ENCODE measurements at regions of chr20 and their contacts with region 1.

Region 1: DNA sequence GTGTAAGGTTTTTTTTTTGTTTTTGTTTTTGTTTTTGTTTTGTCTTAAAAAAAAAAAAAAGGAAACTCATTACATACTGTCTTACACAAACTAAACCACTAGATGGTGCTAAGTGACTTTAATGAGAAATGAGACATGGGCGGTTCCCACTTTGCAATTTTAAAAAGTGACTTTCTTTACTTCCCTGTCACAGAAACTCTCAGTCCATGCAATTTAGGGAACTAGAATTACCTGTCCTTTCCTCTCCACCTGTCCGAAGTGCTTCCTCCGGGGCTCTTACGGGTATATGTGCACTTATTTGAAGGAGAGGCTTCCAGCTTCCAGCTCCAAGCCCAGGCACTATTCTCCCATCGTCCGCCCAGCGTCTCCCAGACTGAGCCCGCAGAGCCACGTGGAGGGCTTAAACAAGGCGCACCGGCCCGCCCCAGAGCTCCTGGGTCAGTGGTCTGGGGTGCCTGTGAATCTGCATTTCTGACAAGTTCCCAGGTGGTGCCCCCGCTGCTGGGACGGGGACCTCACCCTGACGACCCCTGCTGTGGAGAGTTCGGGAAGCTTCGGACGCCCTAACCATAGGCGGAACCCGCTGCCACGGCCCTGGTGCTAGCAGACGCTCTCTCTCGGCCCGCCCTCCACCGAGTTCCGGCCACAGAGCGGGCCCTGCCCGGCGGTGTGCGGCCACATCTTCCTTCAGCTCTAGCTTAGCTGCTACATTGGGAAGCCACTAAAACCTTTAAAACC is 26.1 kb downstream of the BFSP1 start:
- DNase-seq: peak in 1 of 2 experiments; percentile 81
- H3K4me3 ChIP-seq: peak overlapping the region; percentile 4 to 55 (median 44); a peak in 7 of 8 replicates
- H3K27ac ChIP-seq: no peak overlapping the region
- H3K4me1 ChIP-seq: peaks cover 0 to 10% (median 3%) of the 10 kb centered on the region in 4 experiments; a peak in 4 of 7 replicates
- H3K27me3 ChIP-seq: peaks cover 0 to 9% (median 1%) of the 10 kb centered on the region in 4 experiments; a peak in 3 of 7 replicates
- CTCF ChIP-seq: peak in 2 of 3 experiments; percentile 45 to 50; a peak in 2 of 4 replicates
- EP300 ChIP-seq: no peak
- POLR2A ChIP-seq: no peak; a peak in 1 of 3 replicates
- RAD21 ChIP-seq: peak; percentile 71 to 83

Region 2: GRCh38 chr20:17491041-17491440 is 14.0 kb before region 1 on chr20:
- CTCF ChIA-PET with region 1: interaction called, 13 read pairs
- POLR2A ChIA-PET with region 1: no interaction called
- DNase-seq: no peak
- H3K4me3 ChIP-seq: no peak overlapping the region
- H3K27ac ChIP-seq: no peak overlapping the region
- H3K4me1 ChIP-seq: no peaks in the 10 kb centered on the region
- H3K27me3 ChIP-seq: no peaks in the 10 kb centered on the region
- CTCF ChIP-seq: no peak
- EP300 ChIP-seq: no peak
- POLR2A ChIP-seq: no peak
- RAD21 ChIP-seq: no peak

Region 3: GRCh38 chr20:17518339-17519052 is 13.4 kb after region 1 on chr20:
- CTCF ChIA-PET with region 1: interaction called, 23 read pairs
- POLR2A ChIA-PET with region 1: interaction called, 10 read pairs
- DNase-seq: peak in 1 of 2 experiments; percentile 63
- H3K4me3 ChIP-seq: no peak overlapping the region
- H3K27ac ChIP-seq: no peak overlapping the region
- H3K4me1 ChIP-seq: no peaks in the 10 kb centered on the region
- H3K27me3 ChIP-seq: no peaks in the 10 kb centered on the region
- CTCF ChIP-seq: no peak
- EP300 ChIP-seq: no peak
- POLR2A ChIP-seq: no peak
- RAD21 ChIP-seq: no peak

Region 4: DNA sequence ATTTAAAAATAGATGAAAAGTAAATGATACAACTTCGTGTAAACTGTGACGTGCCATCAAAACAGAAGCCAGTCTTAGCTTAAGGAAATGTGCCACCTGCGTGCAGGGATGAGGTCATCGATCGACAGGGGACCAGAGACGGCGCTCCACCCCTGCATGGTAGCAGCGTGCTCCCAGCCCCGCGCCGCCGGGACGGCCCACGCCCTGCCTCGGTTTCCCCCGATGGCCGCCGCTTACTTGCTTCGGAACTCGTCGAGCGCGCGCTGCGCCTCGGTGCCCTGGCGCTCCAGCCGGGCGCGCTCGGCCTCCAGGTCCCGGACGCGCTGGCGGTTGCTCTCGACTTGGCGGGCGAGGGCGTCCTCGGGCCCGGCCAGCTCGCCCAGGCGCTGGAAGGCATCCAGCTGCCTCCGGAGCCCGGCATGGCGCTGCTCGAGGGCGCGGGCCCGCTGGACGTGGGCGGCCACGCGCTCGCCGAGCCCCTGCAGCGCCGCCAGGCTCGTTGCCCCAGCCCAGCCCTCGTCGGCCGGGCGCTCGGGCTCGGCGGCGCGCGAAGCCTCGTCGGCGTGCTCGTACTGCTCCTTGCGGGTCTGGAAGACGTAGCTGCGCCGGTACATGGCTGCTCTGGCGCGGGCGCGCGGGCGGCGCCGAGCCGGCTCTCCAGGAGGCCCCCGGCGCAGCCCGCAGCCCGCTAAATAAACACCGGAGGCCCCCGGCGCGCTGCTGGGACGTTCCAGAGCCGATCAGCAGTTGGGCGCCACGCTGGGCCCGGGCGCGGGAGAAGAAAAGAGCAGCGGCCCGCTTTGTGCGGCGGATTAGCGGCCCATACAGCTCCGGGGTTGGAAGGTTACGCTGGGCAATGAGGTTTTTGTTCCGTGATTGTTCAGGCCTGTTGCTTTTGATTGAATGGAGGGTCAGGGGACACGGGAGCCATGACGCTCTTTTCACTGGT is 25.9 kb after region 1 on chr20 and contains the start of gene BFSP1:
- CTCF ChIA-PET with region 1: interaction called, 13 read pairs
- POLR2A ChIA-PET with region 1: interaction called, 7 read pairs
- DNase-seq: peak; percentile 25 to 82
- H3K4me3 ChIP-seq: peak within 1 kb of the TSS; percentile 46 to 67 (median 52)
- H3K27ac ChIP-seq: peak within 1 kb of the TSS; percentile 63; the same call in 1 of the 2 replicates
- H3K4me1 ChIP-seq: peaks cover 5 to 12% (median 9%) of the 10 kb centered on the region in 4 experiments
- H3K27me3 ChIP-seq: peaks cover 2 to 17% (median 11%) of the 10 kb centered on the region in 4 experiments
- CTCF ChIP-seq: no peak
- EP300 ChIP-seq: no peak
- POLR2A ChIP-seq: peak in 1 of 2 experiments; percentile 47; a peak in 1 of 3 replicates
- RAD21 ChIP-seq: no peak
- total RNA-seq, gene BFSP1: 2.5 and 3.2 TPM in 2 replicates

Region 5: GRCh38 chr20:17536944-17537444 is 31.9 kb after region 1 on chr20:
- CTCF ChIA-PET with region 1: interaction called, 13 read pairs
- POLR2A ChIA-PET with region 1: interaction called, 3 read pairs
- DNase-seq: peak; percentile 71 to 78
- H3K4me3 ChIP-seq: no peak overlapping the region
- H3K27ac ChIP-seq: no peak overlapping the region
- H3K4me1 ChIP-seq: peaks cover 5 to 13% (median 8%) of the 10 kb centered on the region in 4 experiments; a peak in 6 of 7 replicates
- H3K27me3 ChIP-seq: no peaks in the 10 kb centered on the region
- CTCF ChIP-seq: peak; percentile 64 to 99 (median 98)
- EP300 ChIP-seq: no peak
- POLR2A ChIP-seq: no peak
- RAD21 ChIP-seq: peak; percentile 97

Region 6: DNA sequence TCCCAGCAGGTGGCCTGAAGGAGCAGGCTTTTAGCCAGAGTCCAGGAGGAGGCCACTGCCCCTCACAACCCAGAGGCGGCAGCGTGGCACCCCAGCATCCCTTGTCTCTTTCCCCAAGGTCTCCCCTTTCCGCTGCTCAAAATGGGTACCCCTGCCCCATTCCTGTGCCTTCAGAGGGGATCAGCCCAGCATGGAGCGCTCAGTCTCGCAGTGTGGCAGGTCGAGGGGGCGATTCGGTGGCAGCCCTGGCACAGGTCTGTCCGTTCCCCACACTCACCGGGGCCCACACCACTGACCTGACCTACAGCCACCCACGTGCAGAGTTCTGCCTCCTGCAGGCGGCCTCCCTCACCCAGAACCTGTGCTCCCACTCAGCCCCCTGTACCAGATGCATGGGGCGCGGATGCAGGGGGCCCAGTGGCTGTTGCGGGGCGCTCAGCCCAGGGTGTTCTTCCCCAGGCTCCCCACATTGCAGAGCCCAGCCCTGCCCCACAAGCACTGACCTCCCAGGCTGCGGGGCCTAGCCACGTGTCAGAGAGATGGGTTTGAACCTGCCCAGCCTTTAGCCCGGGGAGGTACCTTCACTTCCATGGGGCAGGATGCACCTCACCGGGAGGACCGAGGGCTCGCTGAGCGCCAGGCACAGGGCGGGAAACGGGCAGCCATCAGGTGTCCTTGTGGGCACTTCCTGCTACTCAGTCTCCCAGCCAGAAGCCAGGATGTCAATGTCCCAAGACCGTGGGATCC is 106.6 kb after region 1 on chr20:
- CTCF ChIA-PET with region 1: interaction called, 114 read pairs
- POLR2A ChIA-PET with region 1: interaction called, 4 read pairs
- DNase-seq: peak in 1 of 2 experiments; percentile 70
- H3K4me3 ChIP-seq: no peak overlapping the region
- H3K27ac ChIP-seq: no peak overlapping the region
- H3K4me1 ChIP-seq: peaks cover 0 to 8% (median 1%) of the 10 kb centered on the region in 4 experiments; a peak in 3 of 7 replicates
- H3K27me3 ChIP-seq: no peaks in the 10 kb centered on the region
- CTCF ChIP-seq: peak; percentile 10 to 49 (median 38)
- EP300 ChIP-seq: no peak
- POLR2A ChIP-seq: peak in 1 of 2 experiments; percentile 20; a peak in 2 of 3 replicates
- RAD21 ChIP-seq: peak; percentile 14 to 46; a peak in 2 of 4 replicates

Region 7: DNA sequence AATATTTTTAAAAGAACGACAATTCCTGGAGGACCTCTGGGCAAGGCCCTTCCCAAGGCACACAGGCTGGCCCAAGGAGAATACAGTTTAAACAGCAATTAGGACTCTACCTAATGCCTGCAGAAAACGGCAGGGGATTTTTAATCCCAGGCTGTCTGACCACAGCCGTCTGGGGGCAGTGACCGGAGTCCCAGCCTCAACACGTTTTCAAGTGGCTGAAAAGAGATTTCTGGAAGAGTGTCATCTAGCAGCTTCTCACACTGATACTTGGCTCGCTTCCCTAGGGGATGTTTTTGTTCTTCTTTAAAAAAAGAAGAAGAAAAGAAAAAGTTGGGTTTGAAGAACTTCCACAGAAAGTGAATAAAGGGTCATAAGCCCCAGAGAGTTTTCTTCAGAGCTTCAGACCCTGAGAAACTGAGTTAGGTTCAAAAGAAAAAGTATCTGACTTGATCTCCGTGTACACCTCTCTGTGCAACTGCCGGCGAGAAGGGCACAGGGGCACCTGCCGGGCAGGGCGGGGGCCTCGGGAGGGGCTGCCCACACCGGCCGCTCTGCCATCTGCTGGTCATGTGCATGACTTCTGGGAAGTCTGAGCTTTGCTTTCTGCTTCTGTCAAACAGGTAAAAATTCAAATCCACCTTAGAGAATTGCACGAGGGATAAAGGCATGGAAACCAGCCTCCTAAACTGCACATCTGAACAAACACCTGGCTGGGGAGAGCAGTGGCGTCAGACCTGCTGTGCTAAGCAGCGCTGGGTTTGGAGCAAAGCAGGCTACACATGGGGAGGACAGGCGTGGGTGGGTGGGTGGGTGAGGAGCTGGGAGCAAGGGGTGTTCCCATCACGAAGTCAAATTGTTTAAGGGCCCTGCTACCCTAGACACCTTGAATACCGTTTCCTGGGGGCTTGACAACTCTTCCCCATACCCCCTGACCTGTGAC is 144.0 kb after region 1 on chr20:
- CTCF ChIA-PET with region 1: interaction called, 18 read pairs
- POLR2A ChIA-PET with region 1: no interaction called
- DNase-seq: no peak
- H3K4me3 ChIP-seq: no peak overlapping the region
- H3K27ac ChIP-seq: no peak overlapping the region
- H3K4me1 ChIP-seq: peaks cover 1 to 6% (median 3%) of the 10 kb centered on the region in 4 experiments; a peak in 5 of 7 replicates
- H3K27me3 ChIP-seq: no peaks in the 10 kb centered on the region
- CTCF ChIP-seq: peak; percentile 44 to 59 (median 46)
- EP300 ChIP-seq: no peak
- POLR2A ChIP-seq: no peak
- RAD21 ChIP-seq: peak in 1 of 2 experiments; percentile 38; a peak in 2 of 4 replicates

Region 8: DNA sequence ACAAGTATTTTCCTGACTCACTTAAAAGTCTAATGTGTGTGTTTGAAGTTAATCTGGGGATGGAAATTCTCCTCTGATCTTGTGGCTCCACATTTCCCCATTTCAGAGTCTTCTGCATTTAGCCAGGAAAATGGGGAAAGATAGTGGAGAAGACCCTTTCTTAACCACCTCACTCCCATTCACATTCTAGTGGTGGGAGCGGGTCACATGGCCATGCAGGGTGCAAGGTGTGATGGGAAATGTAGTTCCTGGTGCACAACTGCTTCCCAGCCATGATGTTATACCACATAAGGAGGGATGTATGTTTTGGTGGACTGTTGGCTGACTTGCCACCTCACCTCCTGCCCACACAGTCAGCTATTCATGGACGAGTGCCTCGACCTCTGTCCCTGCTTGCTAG is 256.5 kb after region 1 on chr20:
- CTCF ChIA-PET with region 1: no interaction called
- POLR2A ChIA-PET with region 1: no interaction called
- DNase-seq: no peak
- H3K4me3 ChIP-seq: no peak overlapping the region
- H3K27ac ChIP-seq: no peak overlapping the region
- H3K4me1 ChIP-seq: peaks cover 2 to 10% (median 4%) of the 10 kb centered on the region in 4 experiments; a peak in 6 of 7 replicates
- H3K27me3 ChIP-seq: no peaks in the 10 kb centered on the region
- CTCF ChIP-seq: no peak
- EP300 ChIP-seq: no peak
- POLR2A ChIP-seq: no peak
- RAD21 ChIP-seq: no peak